ENCODE measurements at regions of chr14 and their contacts with region 1.

Region 1: DNA sequence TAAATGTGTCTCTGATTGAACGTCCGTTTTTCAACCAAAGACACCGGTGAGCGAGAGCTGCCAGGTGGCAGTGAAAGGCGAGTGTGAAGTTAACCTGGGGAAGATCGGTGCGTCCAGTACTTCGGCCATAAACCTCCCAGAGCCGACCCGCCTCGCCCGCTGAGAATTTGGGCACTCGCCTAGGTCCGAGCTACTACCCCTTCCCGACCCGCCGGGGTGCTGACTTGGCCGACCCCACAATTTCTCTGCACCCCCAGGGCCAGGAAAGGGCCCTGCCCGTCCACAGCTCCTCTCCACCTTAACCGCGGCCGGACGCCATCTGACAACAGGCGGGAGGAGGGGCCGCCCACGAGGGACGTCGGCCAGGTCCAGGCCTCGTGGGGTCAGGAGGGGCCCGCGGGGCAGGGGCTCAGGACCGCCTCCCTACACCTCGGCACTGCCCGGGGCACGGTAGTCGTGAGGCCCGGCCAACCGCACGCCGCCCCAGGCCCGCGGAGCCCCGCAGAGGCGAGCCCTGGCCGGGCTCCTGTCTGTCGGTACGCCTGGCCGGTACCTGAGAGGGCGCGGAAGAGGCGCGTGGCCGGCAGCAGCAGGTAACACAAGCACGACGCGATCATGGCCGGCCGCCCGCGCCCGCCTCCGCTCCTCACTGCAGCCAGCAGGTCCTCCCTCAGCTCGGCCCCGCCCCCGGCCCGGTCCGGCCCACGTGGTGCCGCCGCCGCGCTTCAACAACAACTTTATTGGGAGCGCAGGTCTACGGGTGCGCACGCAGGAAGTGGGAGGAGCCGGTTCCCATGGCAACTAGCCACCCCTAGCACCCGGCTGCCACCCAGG is at the start of gene ANGEL1:
- DNase-seq: peak; percentile 98
- ATAC-seq: peak; percentile 96
- H3K4me3 Mint-ChIP-seq: peak within 1 kb of the TSS; percentile 90
- H3K27ac Mint-ChIP-seq: peak within 1 kb of the TSS; percentile 85
- H3K4me1 Mint-ChIP-seq: peaks cover 21% of the 10 kb centered on the region
- H3K27me3 Mint-ChIP-seq: no peaks in the 10 kb centered on the region
- total RNA-seq, gene ANGEL1: 11.5 to 13.7 TPM

Region 2: GRCh38 chr14:76720382-76720813 is 92.0 kb before region 1 on chr14:
- CTCF ChIA-PET with region 1: interaction called, 14 read pairs
- POLR2A ChIA-PET with region 1: no interaction called
- DNase-seq: no peak
- ATAC-seq: no peak
- H3K4me3 Mint-ChIP-seq: no peak overlapping the region
- H3K27ac Mint-ChIP-seq: no peak overlapping the region
- H3K4me1 Mint-ChIP-seq: peaks cover 3% of the 10 kb centered on the region
- H3K27me3 Mint-ChIP-seq: peaks cover 33% of the 10 kb centered on the region

Region 3: DNA sequence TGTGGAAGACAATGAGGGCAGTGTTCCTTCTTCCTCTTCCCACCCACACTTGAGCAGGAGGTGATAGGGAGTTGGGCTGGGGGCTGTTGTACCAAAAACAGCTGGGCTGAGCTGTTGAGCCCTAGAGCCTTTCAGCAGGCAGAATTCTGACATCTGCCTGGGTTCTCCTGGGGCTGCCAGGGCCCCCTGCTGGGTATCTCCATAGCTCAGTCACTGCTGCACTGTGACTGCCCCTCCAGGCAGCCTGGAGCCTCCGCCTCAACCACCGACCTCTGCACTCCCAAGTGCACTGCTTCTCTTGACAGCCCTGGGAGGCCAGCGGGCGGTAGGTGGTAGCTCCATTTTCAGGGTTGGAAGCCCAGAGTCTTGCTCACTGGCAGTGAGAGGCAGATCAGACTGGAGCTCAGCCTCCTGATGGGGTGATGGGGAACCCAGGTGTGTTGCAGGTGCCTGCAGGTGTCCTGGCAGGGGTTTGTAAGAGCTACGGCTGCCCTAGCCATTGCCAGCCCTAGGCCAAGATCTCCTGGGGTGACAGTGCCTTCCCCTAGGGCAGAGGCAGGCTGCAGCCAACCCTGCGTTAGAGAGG is 35.7 kb before region 1 on chr14:
- CTCF ChIA-PET with region 1: interaction called, 36 read pairs
- POLR2A ChIA-PET with region 1: no interaction called
- DNase-seq: no peak
- ATAC-seq: no peak
- H3K4me3 Mint-ChIP-seq: no peak overlapping the region
- H3K27ac Mint-ChIP-seq: no peak overlapping the region
- H3K4me1 Mint-ChIP-seq: peaks cover 38% of the 10 kb centered on the region
- H3K27me3 Mint-ChIP-seq: no peaks in the 10 kb centered on the region

Region 4: GRCh38 chr14:76784266-76785264 is 27.9 kb before region 1 on chr14:
- CTCF ChIA-PET with region 1: interaction called, 36 read pairs
- POLR2A ChIA-PET with region 1: no interaction called
- DNase-seq: peak; percentile 68
- ATAC-seq: peak; percentile 81
- H3K4me3 Mint-ChIP-seq: no peak overlapping the region
- H3K27ac Mint-ChIP-seq: peak overlapping the region; percentile 12
- H3K4me1 Mint-ChIP-seq: peaks cover 50% of the 10 kb centered on the region
- H3K27me3 Mint-ChIP-seq: no peaks in the 10 kb centered on the region

Measured in activated CD8-positive, alpha-beta T cell treated with anti-CD3 and anti-CD28 coated beads, Interleukin-2, amount 10 ng/mL, durations not matched to agents 7 days and 5 days (primary cell).